AG04449 (cell line): ENCODE measurements at regions of chr11 and their contacts with region 1.

Region 1: DNA sequence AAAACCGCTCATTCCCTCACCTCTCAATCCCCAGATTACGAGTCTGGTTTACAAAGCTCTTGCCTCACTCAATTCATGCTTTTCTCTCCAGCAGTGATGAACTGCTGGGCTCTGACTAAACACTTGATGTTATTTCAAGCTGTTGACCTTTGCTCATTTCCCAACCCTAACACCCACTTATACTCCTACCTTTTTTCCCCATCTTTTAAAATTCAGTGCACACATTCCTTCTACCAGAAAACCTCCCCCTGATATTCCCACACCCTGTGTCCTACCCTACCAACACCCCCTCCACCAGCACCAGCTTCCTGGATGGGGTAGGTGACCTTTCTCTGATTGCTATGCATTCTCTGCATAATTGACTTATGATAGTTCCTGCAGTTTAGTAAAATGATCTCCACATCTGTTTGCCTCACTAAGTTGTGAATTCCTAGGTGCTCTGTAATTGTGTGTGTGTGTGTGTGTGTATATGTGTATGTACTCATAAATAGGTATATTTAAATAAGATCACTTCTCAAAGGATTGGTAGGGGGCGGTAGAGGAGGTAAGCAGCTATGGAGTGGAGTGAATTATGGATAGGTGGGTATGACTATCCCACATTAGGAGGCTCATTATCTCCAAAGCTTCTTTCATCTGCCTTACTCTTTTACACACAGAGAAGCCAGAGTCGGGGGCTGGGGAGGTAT is 842 bp downstream of the HEPACAM start:
- DNase-seq: peak; percentile 72
- H3K4me3 ChIP-seq: no peak overlapping the region
- CTCF ChIP-seq: no peak

Region 2: DNA sequence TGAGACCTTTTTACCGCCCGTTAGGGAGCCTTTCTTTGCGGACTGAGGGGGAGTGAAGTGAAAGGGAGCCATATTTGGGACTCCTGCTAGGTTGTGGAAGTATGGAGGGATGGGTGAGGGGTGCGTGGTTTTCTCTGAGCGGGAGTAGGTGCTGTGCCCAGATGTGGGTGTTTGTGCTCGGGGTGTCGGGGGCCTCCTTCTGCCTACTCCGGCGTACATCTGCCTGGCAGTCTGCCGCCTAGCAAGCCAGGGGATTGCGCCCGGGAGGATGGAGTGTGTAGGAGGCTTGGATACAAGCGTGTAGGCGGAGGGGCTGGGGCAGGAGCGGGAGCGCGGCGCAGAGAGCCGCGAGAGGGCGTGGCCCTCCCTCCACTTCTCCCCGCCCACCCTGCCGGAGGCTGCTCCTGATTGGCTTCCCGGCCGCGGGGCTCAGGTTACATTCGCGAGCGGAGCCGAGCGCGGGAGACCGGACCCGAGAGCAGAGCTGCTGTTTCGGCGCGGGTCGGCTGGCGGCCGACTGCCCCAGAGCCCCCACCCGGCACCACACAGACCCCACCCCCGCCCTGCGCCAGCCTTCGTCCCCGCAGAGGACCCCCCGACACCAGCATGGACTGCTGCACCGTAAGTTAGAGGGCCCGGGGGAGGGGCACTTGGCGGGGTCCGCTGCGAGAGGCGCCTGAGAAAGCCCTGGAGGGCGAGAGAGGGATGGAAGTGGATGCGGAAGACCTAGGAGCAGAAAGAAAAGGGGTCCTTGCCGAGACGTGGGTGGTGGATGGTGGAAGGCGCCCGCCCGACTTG is 195.3 kb before region 1 on chr11 and contains the start of gene NRGN:
- CTCF ChIA-PET with region 1: no interaction called
- POLR2A ChIA-PET with region 1: no interaction called
- DNase-seq: no peak
- H3K4me3 ChIP-seq: peak within 1 kb of the TSS; percentile 60
- CTCF ChIP-seq: no peak

Region 3: DNA sequence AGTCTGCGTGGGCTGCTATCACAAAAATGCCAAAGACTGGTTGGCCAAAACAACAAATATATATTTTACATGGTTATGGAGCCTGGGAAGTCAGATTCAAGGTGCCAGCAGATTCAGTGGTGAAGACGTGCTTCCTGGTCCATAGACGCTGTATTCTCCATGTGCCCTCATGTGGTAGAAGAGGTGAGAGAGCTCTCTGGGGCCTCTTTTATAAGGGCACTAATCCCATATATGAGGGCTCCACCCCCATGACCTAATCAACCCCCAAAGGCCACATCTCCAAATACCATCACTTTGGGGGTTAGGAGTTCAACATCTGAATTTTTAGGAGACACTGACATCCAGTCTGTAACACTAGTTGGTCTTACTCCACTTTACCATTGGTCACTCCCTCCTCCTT is 79.6 kb before region 1 on chr11:
- CTCF ChIA-PET with region 1: no interaction called
- POLR2A ChIA-PET with region 1: no interaction called
- DNase-seq: no peak
- H3K4me3 ChIP-seq: no peak overlapping the region
- CTCF ChIP-seq: no peak

Region 4: GRCh38 chr11:124920870-124921609 is 14.0 kb before region 1 on chr11:
- CTCF ChIA-PET with region 1: interaction called, 14 read pairs
- POLR2A ChIA-PET with region 1: no interaction called
- DNase-seq: no peak
- H3K4me3 ChIP-seq: peak overlapping the region; percentile 54
- CTCF ChIP-seq: peak; percentile 5

Region 5: GRCh38 chr11:125123947-125124617 is 189.1 kb after region 1 on chr11:
- CTCF ChIA-PET with region 1: no interaction called
- POLR2A ChIA-PET with region 1: no interaction called
- DNase-seq: no peak
- H3K4me3 ChIP-seq: no peak overlapping the region
- CTCF ChIP-seq: peak; percentile 41